Caco-2 (cell line): ENCODE measurements at regions of chr12 and their contacts with region 1.

Region 1: DNA sequence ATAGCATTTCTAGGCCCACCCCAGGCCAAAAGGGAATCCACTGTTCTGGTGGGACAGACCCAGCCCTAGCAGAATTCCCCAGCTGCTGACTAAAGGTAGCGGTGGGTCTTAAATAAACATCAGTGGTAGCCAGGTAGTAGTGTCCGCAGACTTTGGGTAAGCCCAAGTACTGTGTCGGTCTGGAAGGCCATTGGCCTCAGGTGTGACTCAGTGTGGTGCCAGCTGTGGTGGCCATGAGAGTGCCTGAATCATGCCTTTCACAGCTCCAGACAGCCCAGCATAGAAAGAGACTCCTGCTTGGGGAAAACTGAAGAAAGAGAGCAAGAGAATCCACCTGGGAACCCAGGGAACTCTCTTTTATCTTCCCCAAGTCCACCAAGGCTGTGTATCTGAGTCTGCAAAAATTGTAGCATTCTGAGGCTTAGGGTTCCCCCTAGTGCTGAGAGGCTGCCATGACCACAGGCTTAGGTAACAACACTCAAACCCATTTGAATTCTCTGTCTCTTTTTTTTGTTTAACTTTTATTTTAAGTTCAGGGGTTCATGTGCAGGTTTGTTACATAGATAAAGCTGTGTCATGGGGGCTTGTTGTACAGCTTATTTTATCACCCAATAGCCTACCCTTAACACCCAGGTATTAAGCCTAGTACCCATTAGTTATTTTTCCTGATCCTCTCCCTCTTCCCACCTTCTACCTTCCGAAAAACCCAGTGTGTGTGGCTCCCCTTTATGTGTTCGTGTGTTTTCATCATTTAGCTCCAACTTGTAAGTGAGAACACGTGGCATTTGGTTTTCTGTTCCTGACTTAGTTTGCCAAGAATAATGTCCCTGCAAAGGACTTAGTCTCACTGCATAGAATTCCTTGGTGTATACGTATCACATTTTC is 16.7 kb upstream of the CD163L1 start:
- DNase-seq: peak; percentile 64 to 82
- H3K4me3 ChIP-seq: no peak overlapping the region
- H3K4me3 Mint-ChIP-seq: no peak overlapping the region
- H3K27ac Mint-ChIP-seq: no peak overlapping the region
- H3K4me1 ChIP-seq: no peaks in the 10 kb centered on the region
- H3K4me1 Mint-ChIP-seq: no peaks in the 10 kb centered on the region
- H3K27me3 ChIP-seq: no peaks in the 10 kb centered on the region
- H3K27me3 Mint-ChIP-seq: peaks cover 4% of the 10 kb centered on the region
- CTCF ChIP-seq: peak; percentile 98 to 99

Region 2: GRCh38 chr12:7142056-7142644 is 318.5 kb before region 1 on chr12:
- CTCF ChIA-PET with region 1: no interaction called
- POLR2A ChIA-PET with region 1: no interaction called
- intact Hi-C with region 1: loop called (anchors 1 kb)
- DNase-seq: peak; percentile 75 to 81
- H3K4me3 ChIP-seq: no peak overlapping the region
- H3K4me3 Mint-ChIP-seq: no peak overlapping the region
- H3K27ac Mint-ChIP-seq: no peak overlapping the region
- H3K4me1 ChIP-seq: no peaks in the 10 kb centered on the region
- H3K4me1 Mint-ChIP-seq: no peaks in the 10 kb centered on the region
- H3K27me3 ChIP-seq: no peaks in the 10 kb centered on the region
- H3K27me3 Mint-ChIP-seq: no peaks in the 10 kb centered on the region
- CTCF ChIP-seq: peak; percentile 91 to 93

Region 3: GRCh38 chr12:7219599-7220243 is 240.9 kb before region 1 on chr12:
- CTCF ChIA-PET with region 1: no interaction called
- POLR2A ChIA-PET with region 1: no interaction called
- intact Hi-C with region 1: loop called (anchors 1 kb)
- DNase-seq: peak; percentile 80 to 85
- H3K4me3 ChIP-seq: no peak overlapping the region
- H3K4me3 Mint-ChIP-seq: no peak overlapping the region
- H3K27ac Mint-ChIP-seq: no peak overlapping the region
- H3K4me1 ChIP-seq: no peaks in the 10 kb centered on the region
- H3K4me1 Mint-ChIP-seq: no peaks in the 10 kb centered on the region
- H3K27me3 ChIP-seq: no peaks in the 10 kb centered on the region
- H3K27me3 Mint-ChIP-seq: no peaks in the 10 kb centered on the region
- CTCF ChIP-seq: peak; percentile 91 to 99

Region 4: DNA sequence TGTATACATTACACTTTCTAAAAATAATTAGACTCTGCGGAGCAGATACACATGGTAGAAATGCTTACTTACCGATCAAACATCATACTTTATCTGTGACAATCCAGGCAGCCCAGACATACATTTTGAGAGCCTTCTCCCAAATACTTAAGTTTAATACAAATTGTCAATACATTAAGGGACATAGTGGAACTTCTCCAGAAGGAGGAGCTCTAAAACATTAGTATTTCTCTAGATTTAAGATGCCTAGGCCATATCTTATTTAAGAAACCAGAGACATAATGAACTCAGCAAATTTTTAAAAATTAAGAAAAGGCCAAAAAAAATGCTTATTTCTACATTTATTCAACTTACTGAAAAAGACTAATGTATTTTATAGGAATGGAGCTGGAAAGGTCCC is 140.7 kb before region 1 on chr12:
- CTCF ChIA-PET with region 1: no interaction called
- POLR2A ChIA-PET with region 1: no interaction called
- intact Hi-C with region 1: loop called (anchors 5 kb)
- DNase-seq: no peak
- H3K4me3 ChIP-seq: no peak overlapping the region
- H3K4me3 Mint-ChIP-seq: no peak overlapping the region
- H3K27ac Mint-ChIP-seq: no peak overlapping the region
- H3K4me1 ChIP-seq: no peaks in the 10 kb centered on the region
- H3K4me1 Mint-ChIP-seq: no peaks in the 10 kb centered on the region
- H3K27me3 ChIP-seq: no peaks in the 10 kb centered on the region
- H3K27me3 Mint-ChIP-seq: peaks cover 12% of the 10 kb centered on the region
- CTCF ChIP-seq: no peak

Region 5: DNA sequence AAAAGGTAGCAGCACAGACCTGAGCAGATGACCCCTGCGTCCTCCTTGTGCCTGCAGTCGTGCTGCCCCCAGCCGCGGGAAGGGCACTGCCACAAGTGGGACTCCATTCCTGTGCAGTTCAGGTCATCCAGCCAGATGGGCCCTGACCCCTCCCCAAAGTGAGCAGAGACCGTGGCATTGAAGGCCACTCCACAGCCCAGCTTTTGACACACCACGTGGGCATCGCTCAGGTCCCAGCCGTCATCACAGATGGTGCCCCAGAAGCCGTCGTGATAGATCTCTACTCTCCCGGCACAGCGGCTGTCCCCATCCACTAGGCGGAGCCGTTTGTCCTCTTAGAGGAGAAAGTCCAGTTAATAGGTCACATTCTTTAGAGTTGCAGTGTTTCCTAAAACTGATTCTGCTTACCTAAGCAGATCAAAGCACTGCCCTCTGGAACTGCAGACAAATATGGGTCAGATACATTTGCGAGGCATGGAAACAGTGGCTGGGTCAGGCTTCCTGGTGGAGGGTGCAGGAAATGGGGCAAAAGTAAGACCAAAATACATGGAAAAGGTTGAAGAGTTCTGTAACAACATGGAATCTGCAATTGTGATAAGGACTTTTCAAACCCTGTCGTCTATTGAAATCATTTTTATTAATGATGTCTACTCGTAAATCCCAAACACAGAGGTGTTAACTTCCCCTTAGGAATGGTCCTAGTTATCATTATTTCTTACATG is 86.0 kb before region 1 on chr12:
- CTCF ChIA-PET with region 1: no interaction called
- POLR2A ChIA-PET with region 1: no interaction called
- intact Hi-C with region 1: loop called (anchors 1 kb)
- DNase-seq: peak; percentile 85
- H3K4me3 ChIP-seq: no peak overlapping the region
- H3K4me3 Mint-ChIP-seq: no peak overlapping the region
- H3K27ac Mint-ChIP-seq: no peak overlapping the region
- H3K4me1 ChIP-seq: peaks cover 12% of the 10 kb centered on the region; the same call in 1 of the 2 replicates
- H3K4me1 Mint-ChIP-seq: peaks cover 10% of the 10 kb centered on the region
- H3K27me3 ChIP-seq: no peaks in the 10 kb centered on the region
- H3K27me3 Mint-ChIP-seq: peaks cover 6% of the 10 kb centered on the region
- CTCF ChIP-seq: peak; percentile 94 to 96

Region 6: GRCh38 chr12:7555752-7556151 is 95.1 kb after region 1 on chr12:
- CTCF ChIA-PET with region 1: no interaction called
- POLR2A ChIA-PET with region 1: no interaction called
- intact Hi-C with region 1: no loop called
- DNase-seq: no peak
- H3K4me3 ChIP-seq: no peak overlapping the region
- H3K4me3 Mint-ChIP-seq: no peak overlapping the region
- H3K27ac Mint-ChIP-seq: no peak overlapping the region
- H3K4me1 ChIP-seq: 0 out of 2 replicates have a peak, but pooled peaks cover 3% of the 10 kb centered on the region
- H3K4me1 Mint-ChIP-seq: no peaks in the 10 kb centered on the region
- H3K27me3 ChIP-seq: no peaks in the 10 kb centered on the region
- H3K27me3 Mint-ChIP-seq: peaks cover 15% of the 10 kb centered on the region
- CTCF ChIP-seq: no peak

Region 7: DNA sequence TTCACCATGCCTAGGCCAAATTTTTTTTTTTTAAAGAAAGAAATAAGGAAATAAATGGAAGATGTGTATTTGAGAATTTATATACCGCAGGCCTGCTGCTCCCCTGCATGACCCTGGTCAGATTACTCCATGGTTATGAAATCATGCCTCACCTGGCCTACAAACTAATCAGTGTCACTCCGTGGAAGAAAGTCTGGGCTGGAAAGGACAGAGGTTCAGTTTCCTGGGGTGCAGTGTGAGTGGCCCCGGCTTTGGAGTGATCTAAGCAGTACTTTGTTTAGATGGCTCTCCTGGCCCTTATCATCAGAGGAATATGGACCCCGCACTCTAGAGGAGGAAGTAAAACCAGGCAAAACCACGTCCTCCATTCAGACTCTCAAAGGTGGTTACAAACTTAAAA is 195.5 kb after region 1 on chr12:
- CTCF ChIA-PET with region 1: no interaction called
- POLR2A ChIA-PET with region 1: no interaction called
- intact Hi-C with region 1: no loop called
- DNase-seq: peak in 1 of 2 experiments; percentile 7
- H3K4me3 ChIP-seq: no peak overlapping the region
- H3K4me3 Mint-ChIP-seq: no peak overlapping the region
- H3K27ac Mint-ChIP-seq: no peak overlapping the region
- H3K4me1 ChIP-seq: no peaks in the 10 kb centered on the region
- H3K4me1 Mint-ChIP-seq: no peaks in the 10 kb centered on the region
- H3K27me3 ChIP-seq: no peaks in the 10 kb centered on the region
- H3K27me3 Mint-ChIP-seq: no peaks in the 10 kb centered on the region
- CTCF ChIP-seq: no peak